HCT116 (cell line): ENCODE measurements at regions of chr5 and their contacts with region 1.

Region 1: GRCh38 chr5:71475788-71476384 is 20.4 kb downstream of the BDP1 start:
- DNase-seq: no peak
- ATAC-seq: peak; percentile 83
- H3K4me3 ChIP-seq: no peak overlapping the region
- H3K27ac ChIP-seq: no peak overlapping the region
- H3K4me1 ChIP-seq: peaks cover 13 to 15% of the 10 kb centered on the region in 2 experiments
- H3K27me3 ChIP-seq: no peaks in the 10 kb centered on the region
- CTCF ChIP-seq: peak; percentile 46 to 80 (median 77); a peak in 5 of 6 replicates
- POLR2A ChIP-seq: no peak
- RAD21 ChIP-seq: peak; percentile 54

Region 2: DNA sequence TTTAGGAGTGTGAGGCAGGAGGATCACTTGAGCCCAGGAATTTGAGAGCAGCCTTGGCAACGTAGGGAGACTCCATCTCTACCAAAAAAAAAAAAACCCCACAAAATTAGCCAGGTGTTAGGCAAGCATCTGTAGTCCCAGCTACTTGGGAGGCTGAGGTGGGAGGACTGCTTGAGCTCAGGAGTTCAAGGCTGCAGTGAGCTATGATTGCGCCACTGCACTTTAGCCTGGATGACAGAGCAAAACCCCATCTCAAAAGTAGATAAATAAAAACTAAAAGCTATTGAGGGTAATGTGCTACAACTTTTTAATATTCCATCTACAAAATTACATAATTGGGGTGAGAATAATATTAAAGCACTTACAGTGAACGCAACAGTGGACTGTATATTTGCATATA is 14.5 kb before region 1 on chr5:
- CTCF ChIA-PET with region 1: interaction called, 10 read pairs
- POLR2A ChIA-PET with region 1: no interaction called
- RAD21 ChIA-PET with region 1: no interaction called
- intact Hi-C with region 1: no loop called
- DNase-seq: no peak
- ATAC-seq: no peak
- H3K4me3 ChIP-seq: no peak overlapping the region
- H3K27ac ChIP-seq: no peak overlapping the region
- H3K4me1 ChIP-seq: peaks cover 7 to 8% of the 10 kb centered on the region in 2 experiments; a peak in 3 of 4 replicates
- H3K27me3 ChIP-seq: no peaks in the 10 kb centered on the region
- CTCF ChIP-seq: no peak
- POLR2A ChIP-seq: no peak
- RAD21 ChIP-seq: no peak

Region 3: GRCh38 chr5:71873191-71873591 is 397.3 kb after region 1 on chr5:
- CTCF ChIA-PET with region 1: no interaction called
- POLR2A ChIA-PET with region 1: no interaction called
- RAD21 ChIA-PET with region 1: no interaction called
- intact Hi-C with region 1: no loop called
- DNase-seq: no peak
- ATAC-seq: no peak
- H3K4me3 ChIP-seq: no peak overlapping the region
- H3K27ac ChIP-seq: no peak overlapping the region
- H3K4me1 ChIP-seq: no peaks in the 10 kb centered on the region
- H3K27me3 ChIP-seq: no peaks in the 10 kb centered on the region
- CTCF ChIP-seq: no peak
- POLR2A ChIP-seq: no peak
- RAD21 ChIP-seq: no peak

Region 4: GRCh38 chr5:72572236-72572765 is 1096.4 kb after region 1 on chr5:
- CTCF ChIA-PET with region 1: no interaction called
- POLR2A ChIA-PET with region 1: no interaction called
- RAD21 ChIA-PET with region 1: no interaction called
- intact Hi-C with region 1: no loop called
- DNase-seq: no peak
- ATAC-seq: no peak
- H3K4me3 ChIP-seq: no peak overlapping the region
- H3K27ac ChIP-seq: no peak overlapping the region
- H3K4me1 ChIP-seq: no peaks in the 10 kb centered on the region
- H3K27me3 ChIP-seq: no peaks in the 10 kb centered on the region; the same call in 1 of the 2 replicates
- CTCF ChIP-seq: no peak
- POLR2A ChIP-seq: no peak
- RAD21 ChIP-seq: no peak